Heart left ventricle (tissue), 16 donors: ENCODE measurements at regions of chr15 and their contacts with region 1.

Region 1: GRCh38 chr15:80507712-80508316 is 103.6 kb downstream of the ARNT2 start:
- DNase-seq: no peak
- ATAC-seq: peak in 2 of 4 donors; percentile 29 to 47
- H3K4me3 ChIP-seq: no peak overlapping the region
- H3K27ac ChIP-seq: peak overlapping the region in 1 of 12 donors; percentile 17
- H3K4me1 ChIP-seq: peaks cover 0 to 18% (median 4%) of the 10 kb centered on the region in 12 donors
- H3K27me3 ChIP-seq: no peaks in the 10 kb centered on the region
- CTCF ChIP-seq: no peak
- POLR2A ChIP-seq: no peak

Region 2: GRCh38 chr15:80415271-80415670 is 92.5 kb before region 1 on chr15:
- intact Hi-C with region 1: no loop called
- DNase-seq: no peak
- ATAC-seq: no peak
- H3K4me3 ChIP-seq: no peak overlapping the region
- H3K27ac ChIP-seq: no peak overlapping the region
- H3K4me1 ChIP-seq: no peaks in the 10 kb centered on the region
- H3K27me3 ChIP-seq: peaks cover 0 to 2% (median 0%) of the 10 kb centered on the region in 9 donors
- CTCF ChIP-seq: no peak
- POLR2A ChIP-seq: no peak

Region 3: GRCh38 chr15:80464951-80465625 is 42.7 kb before region 1 on chr15:
- intact Hi-C with region 1: loop called in 1 of 10 experiments (anchors 5 kb)
- DNase-seq: no peak
- ATAC-seq: no peak
- H3K4me3 ChIP-seq: no peak overlapping the region
- H3K27ac ChIP-seq: no peak overlapping the region
- H3K4me1 ChIP-seq: peaks cover 0 to 4% (median 0%) of the 10 kb centered on the region in 12 donors
- H3K27me3 ChIP-seq: peaks cover 0 to 40% (median 0%) of the 10 kb centered on the region in 9 donors
- CTCF ChIP-seq: no peak
- POLR2A ChIP-seq: no peak

Region 4: DNA sequence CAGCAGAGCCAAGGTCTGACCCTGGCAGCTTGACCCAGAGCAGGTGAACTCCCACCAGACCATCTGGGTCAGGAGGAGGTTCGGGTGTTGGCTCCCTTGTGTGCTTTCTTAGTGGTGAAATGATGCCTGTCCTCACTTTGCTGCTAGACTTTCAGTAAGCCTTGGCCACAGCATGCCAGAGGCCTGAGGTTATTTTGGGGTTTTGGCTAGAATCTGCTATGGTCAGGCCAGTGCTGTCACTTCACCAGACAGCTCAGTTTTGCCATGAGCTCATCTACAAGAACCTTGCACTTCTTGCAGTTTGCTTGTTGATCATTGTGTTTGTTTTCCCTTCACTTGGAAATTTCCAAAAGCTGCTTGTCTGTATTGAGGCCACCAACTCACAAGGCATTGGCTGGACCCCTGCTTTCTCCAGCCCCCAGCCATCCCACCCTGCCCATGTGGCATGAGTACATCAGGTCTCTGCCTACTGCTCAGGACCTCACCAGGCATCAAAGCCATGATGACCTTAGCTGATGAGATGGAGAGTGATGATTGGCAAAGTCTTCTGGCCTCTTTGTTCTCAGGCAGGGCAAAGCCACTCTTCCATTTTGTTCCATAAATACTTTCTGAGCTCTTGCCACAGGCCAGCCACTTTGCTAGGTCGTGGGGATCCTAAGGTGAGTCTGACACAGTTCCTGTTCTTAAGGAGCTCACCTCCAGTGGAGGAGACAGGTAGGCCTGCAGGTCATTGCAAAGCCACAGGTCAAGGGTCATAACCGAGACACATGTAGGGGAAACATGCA is 18.9 kb after region 1 on chr15:
- intact Hi-C with region 1: no loop called
- DNase-seq: peak in 2 of 5 donors; percentile 23 to 37
- ATAC-seq: peak; percentile 63 to 89 (median 86)
- H3K4me3 ChIP-seq: no peak overlapping the region
- H3K27ac ChIP-seq: peak overlapping the region in 4 of 12 donors; percentile 7 to 61 (median 42)
- H3K4me1 ChIP-seq: peaks cover 0 to 34% (median 13%) of the 10 kb centered on the region in 12 donors
- H3K27me3 ChIP-seq: no peaks in the 10 kb centered on the region
- CTCF ChIP-seq: no peak
- POLR2A ChIP-seq: no peak